T-cell (primary cell): ENCODE measurements at regions of chr5 and their contacts with region 1.

Region 1: GRCh38 chr5:79133657-79134451 is 22.2 kb downstream of the BHMT start:
- DNase-seq: peak; percentile 13 to 75 (median 50)
- ATAC-seq: peak; percentile 77 to 90 (median 80)
- H3K4me3 ChIP-seq: no peak overlapping the region
- H3K4me3 Mint-ChIP-seq: peak overlapping the region; percentile 66 to 76 (median 67)
- H3K27ac ChIP-seq: no peak overlapping the region
- H3K27ac Mint-ChIP-seq: peak overlapping the region; percentile 49 to 73
- H3K4me1 ChIP-seq: peaks cover 2 to 9% of the 10 kb centered on the region in 2 experiments
- H3K4me1 Mint-ChIP-seq: peaks cover 8 to 12% (median 8%) of the 10 kb centered on the region in 3 donors
- H3K27me3 ChIP-seq: no peaks in the 10 kb centered on the region
- H3K27me3 Mint-ChIP-seq: peaks cover 3% of the 10 kb centered on the region in 2 donors

Region 2: DNA sequence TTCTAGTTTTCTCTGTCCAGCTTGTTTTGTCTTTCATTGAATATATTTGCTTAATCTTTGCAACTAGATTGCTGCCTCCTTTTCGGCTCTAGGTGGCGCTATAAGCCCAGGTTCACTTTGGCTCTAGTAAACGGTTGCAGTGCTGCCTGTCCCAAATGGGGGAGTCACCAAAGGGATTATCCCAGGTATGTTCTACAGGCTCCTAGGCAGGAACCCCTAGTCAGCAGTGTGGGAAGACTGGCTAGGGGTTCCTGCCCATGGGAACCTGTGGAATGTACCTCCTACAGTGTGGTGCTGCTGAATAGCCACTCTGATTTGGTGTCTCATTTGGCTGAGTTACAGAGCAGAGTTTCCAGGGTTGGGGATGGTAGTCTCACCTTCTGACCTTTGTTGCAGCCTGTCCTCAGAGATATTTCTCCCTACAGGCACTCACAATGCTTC is 233.9 kb before region 1 on chr5:
- CTCF ChIA-PET with region 1: interaction called in 1 of 2 experiments, 11 read pairs
- POLR2A ChIA-PET with region 1: no interaction called
- DNase-seq: peak in 1 of 35 experiments; percentile 24
- ATAC-seq: no peak
- H3K4me3 ChIP-seq: no peak overlapping the region
- H3K4me3 Mint-ChIP-seq: no peak overlapping the region
- H3K27ac ChIP-seq: no peak overlapping the region
- H3K27ac Mint-ChIP-seq: no peak overlapping the region
- H3K4me1 ChIP-seq: no peaks in the 10 kb centered on the region
- H3K4me1 Mint-ChIP-seq: no peaks in the 10 kb centered on the region
- H3K27me3 ChIP-seq: no peaks in the 10 kb centered on the region
- H3K27me3 Mint-ChIP-seq: no peaks in the 10 kb centered on the region

Region 3: GRCh38 chr5:79107020-79107796 is 26.6 kb before region 1 on chr5:
- CTCF ChIA-PET with region 1: interaction called, 10 read pairs
- POLR2A ChIA-PET with region 1: no interaction called
- DNase-seq: no peak
- ATAC-seq: no peak
- H3K4me3 ChIP-seq: no peak overlapping the region
- H3K4me3 Mint-ChIP-seq: no peak overlapping the region
- H3K27ac ChIP-seq: no peak overlapping the region
- H3K27ac Mint-ChIP-seq: no peak overlapping the region
- H3K4me1 ChIP-seq: no peaks in the 10 kb centered on the region
- H3K4me1 Mint-ChIP-seq: peaks cover 0 to 3% (median 0%) of the 10 kb centered on the region in 3 donors
- H3K27me3 ChIP-seq: peaks cover 4 to 24% of the 10 kb centered on the region in 2 experiments
- H3K27me3 Mint-ChIP-seq: peaks cover 51 to 55% of the 10 kb centered on the region in 2 donors

Region 4: GRCh38 chr5:79464695-79465332 is 331.0 kb after region 1 on chr5:
- CTCF ChIA-PET with region 1: interaction called, 18 to 19 read pairs
- POLR2A ChIA-PET with region 1: interaction called in 1 of 2 experiments, 3 read pairs
- DNase-seq: peak in 1 of 35 experiments; percentile 38
- ATAC-seq: peak in 1 of 4 experiments; percentile 45
- H3K4me3 ChIP-seq: no peak overlapping the region
- H3K4me3 Mint-ChIP-seq: no peak overlapping the region
- H3K27ac ChIP-seq: no peak overlapping the region
- H3K27ac Mint-ChIP-seq: no peak overlapping the region
- H3K4me1 ChIP-seq: no peaks in the 10 kb centered on the region
- H3K4me1 Mint-ChIP-seq: peaks cover 2 to 5% (median 2%) of the 10 kb centered on the region in 3 donors
- H3K27me3 ChIP-seq: no peaks in the 10 kb centered on the region
- H3K27me3 Mint-ChIP-seq: peaks cover 0 to 3% of the 10 kb centered on the region in 2 donors

Region 5: DNA sequence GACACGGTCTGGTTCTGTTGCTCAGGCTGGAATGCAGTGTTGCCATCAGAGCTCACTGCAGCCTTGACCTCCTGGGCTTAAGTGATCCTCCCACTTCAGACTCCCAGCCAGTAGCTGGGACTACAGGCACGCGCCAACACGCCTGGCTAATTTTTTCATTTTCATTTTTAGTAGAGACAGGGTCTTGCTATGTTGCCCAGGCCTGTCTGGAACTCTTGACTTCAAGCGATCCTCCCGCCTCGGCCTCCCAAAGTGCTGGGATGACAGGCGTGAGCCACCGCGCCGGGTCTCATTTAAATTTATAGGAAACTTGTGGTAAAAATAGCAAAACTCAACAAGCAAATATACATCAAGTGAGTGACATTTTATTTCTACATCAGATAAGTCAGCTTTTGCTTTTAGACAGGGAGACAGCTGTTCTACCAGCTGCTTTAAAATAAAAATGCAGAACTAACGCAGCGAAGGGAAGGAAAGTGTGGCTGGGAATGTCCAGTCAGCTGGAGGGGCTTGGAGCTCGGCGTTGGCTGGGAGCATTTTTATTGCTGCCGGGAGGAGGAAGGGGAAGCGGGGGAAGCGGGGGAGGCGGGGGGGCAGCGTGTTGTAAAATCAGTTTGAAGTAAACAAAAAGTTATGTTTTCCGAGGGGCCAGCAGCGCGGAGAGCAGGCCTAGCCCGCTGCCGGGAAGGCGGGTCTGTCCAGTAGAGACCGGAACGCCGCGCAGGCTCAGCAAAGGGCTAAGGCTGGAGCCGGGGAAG is 1273.3 kb after region 1 on chr5:
- CTCF ChIA-PET with region 1: no interaction called
- POLR2A ChIA-PET with region 1: interaction called in 1 of 2 experiments, 11 read pairs
- DNase-seq: peak in 6 of 35 experiments; percentile 0 to 11 (median 2)
- ATAC-seq: peak in 1 of 4 experiments; percentile 0
- H3K4me3 ChIP-seq: peak overlapping the region; percentile 93 to 95
- H3K4me3 Mint-ChIP-seq: peak overlapping the region; percentile 90 to 97 (median 94)
- H3K27ac ChIP-seq: peak overlapping the region; percentile 91
- H3K27ac Mint-ChIP-seq: peak overlapping the region; percentile 98 to 99
- H3K4me1 ChIP-seq: peaks cover 5% of the 10 kb centered on the region in 2 experiments
- H3K4me1 Mint-ChIP-seq: peaks cover 21 to 31% (median 28%) of the 10 kb centered on the region in 3 donors
- H3K27me3 ChIP-seq: no peaks in the 10 kb centered on the region
- H3K27me3 Mint-ChIP-seq: no peaks in the 10 kb centered on the region